ENCODE measurements at regions of chr4 and their contacts with region 1.

Region 1: GRCh38 chr4:122710434-122711308 is 21.8 kb upstream of the BBS12 start:
- DNase-seq: peak; percentile 72
- ATAC-seq: peak; percentile 91
- H3K4me3 Mint-ChIP-seq: peak overlapping the region; percentile 56
- H3K27ac Mint-ChIP-seq: peak overlapping the region; percentile 97
- H3K4me1 Mint-ChIP-seq: peaks cover 79% of the 10 kb centered on the region
- H3K27me3 Mint-ChIP-seq: no peaks in the 10 kb centered on the region

Region 2: GRCh38 chr4:122458625-122459024 is 252.0 kb before region 1 on chr4:
- CTCF ChIA-PET with region 1: interaction called, 3 read pairs
- POLR2A ChIA-PET with region 1: interaction called, 4 read pairs
- intact Hi-C with region 1: loop called (anchors 5 kb)
- DNase-seq: peak; percentile 74
- ATAC-seq: peak; percentile 86
- H3K4me3 Mint-ChIP-seq: peak overlapping the region; percentile 62
- H3K27ac Mint-ChIP-seq: peak overlapping the region; percentile 89
- H3K4me1 Mint-ChIP-seq: peaks cover 51% of the 10 kb centered on the region
- H3K27me3 Mint-ChIP-seq: no peaks in the 10 kb centered on the region

Region 3: GRCh38 chr4:122542411-122543236 is 168.0 kb before region 1 on chr4:
- CTCF ChIA-PET with region 1: no interaction called
- POLR2A ChIA-PET with region 1: interaction called, 3 read pairs
- intact Hi-C with region 1: loop called (anchors 1 to 2 kb)
- DNase-seq: no peak
- ATAC-seq: peak; percentile 63
- H3K4me3 Mint-ChIP-seq: peak overlapping the region; percentile 53
- H3K27ac Mint-ChIP-seq: peak overlapping the region; percentile 95
- H3K4me1 Mint-ChIP-seq: peaks cover 94% of the 10 kb centered on the region
- H3K27me3 Mint-ChIP-seq: no peaks in the 10 kb centered on the region

Region 4: GRCh38 chr4:122617597-122618593 is 92.8 kb before region 1 on chr4:
- CTCF ChIA-PET with region 1: interaction called, 13 read pairs
- POLR2A ChIA-PET with region 1: interaction called, 6 read pairs
- intact Hi-C with region 1: loop called (anchors 1 to 2 kb)
- DNase-seq: no peak
- ATAC-seq: no peak
- H3K4me3 Mint-ChIP-seq: peak overlapping the region; percentile 80
- H3K27ac Mint-ChIP-seq: peak overlapping the region; percentile 87
- H3K4me1 Mint-ChIP-seq: peaks cover 62% of the 10 kb centered on the region
- H3K27me3 Mint-ChIP-seq: no peaks in the 10 kb centered on the region

Region 5: DNA sequence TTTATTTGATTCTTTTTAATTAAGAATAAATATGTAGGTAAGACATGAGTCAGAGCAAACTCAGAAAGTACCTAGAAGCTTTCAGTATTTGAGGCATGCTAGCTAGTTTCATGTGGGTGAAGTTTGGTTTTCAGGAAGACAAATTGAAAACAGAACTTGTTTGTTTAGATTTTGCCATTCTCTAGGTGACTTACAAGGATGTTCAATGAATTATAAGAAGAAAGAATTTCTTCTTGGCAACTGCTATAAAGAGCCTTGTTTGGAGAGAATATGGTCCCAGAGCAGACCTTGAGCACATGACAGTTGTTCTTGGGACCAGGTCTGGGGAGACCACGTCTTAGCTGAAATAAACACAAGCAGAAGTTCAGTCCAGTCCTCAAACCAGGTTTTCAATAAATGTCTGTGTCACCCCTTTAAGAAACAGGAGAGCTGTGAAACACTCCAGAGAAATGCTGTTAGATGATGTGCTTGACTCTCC is 51.8 kb before region 1 on chr4:
- CTCF ChIA-PET with region 1: interaction called, 4 read pairs
- POLR2A ChIA-PET with region 1: interaction called, 13 read pairs
- intact Hi-C with region 1: loop called in 1 of 2 experiments (anchors 1 kb)
- DNase-seq: no peak
- ATAC-seq: peak; percentile 86
- H3K4me3 Mint-ChIP-seq: peak overlapping the region; percentile 42
- H3K27ac Mint-ChIP-seq: peak overlapping the region; percentile 98
- H3K4me1 Mint-ChIP-seq: peaks cover 61% of the 10 kb centered on the region
- H3K27me3 Mint-ChIP-seq: no peaks in the 10 kb centered on the region

Region 6: DNA sequence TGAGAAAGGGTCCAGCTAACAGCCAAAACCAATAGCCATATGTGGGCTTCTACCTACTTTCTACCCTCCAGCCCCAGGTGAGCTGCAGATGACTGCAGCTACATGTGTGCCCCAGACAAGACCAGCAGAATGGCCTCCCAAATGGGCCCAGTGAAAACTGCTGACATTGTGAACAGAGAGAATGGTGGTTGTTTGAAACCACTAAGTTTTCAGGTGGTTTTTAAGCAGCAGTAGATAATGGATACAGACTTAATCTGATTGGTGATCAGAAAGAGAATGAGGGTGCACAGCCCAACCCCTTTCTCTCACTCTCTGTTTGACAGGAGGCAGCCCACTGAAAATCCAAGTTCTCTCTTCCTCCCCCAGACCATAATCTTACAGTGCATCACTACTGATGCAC is 20.7 kb before region 1 on chr4:
- CTCF ChIA-PET with region 1: interaction called, 3 read pairs
- POLR2A ChIA-PET with region 1: interaction called, 3 read pairs
- intact Hi-C with region 1: loop called in 1 of 2 experiments (anchors 2 kb)
- DNase-seq: peak; percentile 49
- ATAC-seq: peak; percentile 81
- H3K4me3 Mint-ChIP-seq: no peak overlapping the region
- H3K27ac Mint-ChIP-seq: peak overlapping the region; percentile 58
- H3K4me1 Mint-ChIP-seq: peaks cover 68% of the 10 kb centered on the region
- H3K27me3 Mint-ChIP-seq: peaks cover 4% of the 10 kb centered on the region

Region 7: DNA sequence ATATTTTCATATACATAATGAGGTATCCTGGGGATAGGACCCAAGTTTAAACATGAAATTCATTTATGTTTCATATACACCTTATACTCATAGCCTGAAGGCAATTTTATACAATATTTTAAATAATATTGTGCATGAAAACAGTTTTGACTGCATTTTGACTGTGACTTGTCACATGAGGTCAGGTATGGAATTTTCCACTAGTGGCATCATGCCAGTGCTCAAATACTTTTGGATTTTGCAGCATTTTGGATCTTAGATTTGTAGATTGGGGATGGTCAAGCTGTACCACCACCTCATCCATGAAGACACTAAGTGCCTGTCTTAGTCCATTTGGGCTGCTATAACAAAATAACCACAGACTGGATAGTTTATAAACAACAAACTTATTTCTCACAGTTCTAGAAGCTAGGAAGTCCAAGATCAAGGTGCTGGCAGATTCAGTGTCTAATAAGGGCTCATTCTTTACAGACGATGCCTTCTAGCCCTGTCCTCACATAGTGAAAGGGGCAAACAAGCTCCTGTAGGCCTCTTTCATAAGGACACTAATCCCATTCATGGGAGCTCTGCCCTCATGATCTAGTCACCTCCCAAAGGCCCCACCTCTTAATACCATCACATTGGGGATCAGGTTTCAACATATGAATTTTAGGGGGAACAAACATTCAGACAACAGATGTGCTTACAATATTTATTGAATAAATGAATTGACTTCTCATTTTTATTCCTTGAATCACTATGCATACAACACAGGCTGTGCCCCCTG is 202.3 kb after region 1 on chr4:
- CTCF ChIA-PET with region 1: no interaction called
- POLR2A ChIA-PET with region 1: no interaction called
- intact Hi-C with region 1: no loop called
- DNase-seq: no peak
- ATAC-seq: no peak
- H3K4me3 Mint-ChIP-seq: no peak overlapping the region
- H3K27ac Mint-ChIP-seq: no peak overlapping the region
- H3K4me1 Mint-ChIP-seq: no peaks in the 10 kb centered on the region
- H3K27me3 Mint-ChIP-seq: no peaks in the 10 kb centered on the region

Measured in activated CD4-positive, alpha-beta T cell treated with anti-CD3 and anti-CD28 coated beads for 36 hours (primary cell).